Caco-2 (cell line): ENCODE measurements at regions of chr2 and their contacts with region 1.

Region 1: DNA sequence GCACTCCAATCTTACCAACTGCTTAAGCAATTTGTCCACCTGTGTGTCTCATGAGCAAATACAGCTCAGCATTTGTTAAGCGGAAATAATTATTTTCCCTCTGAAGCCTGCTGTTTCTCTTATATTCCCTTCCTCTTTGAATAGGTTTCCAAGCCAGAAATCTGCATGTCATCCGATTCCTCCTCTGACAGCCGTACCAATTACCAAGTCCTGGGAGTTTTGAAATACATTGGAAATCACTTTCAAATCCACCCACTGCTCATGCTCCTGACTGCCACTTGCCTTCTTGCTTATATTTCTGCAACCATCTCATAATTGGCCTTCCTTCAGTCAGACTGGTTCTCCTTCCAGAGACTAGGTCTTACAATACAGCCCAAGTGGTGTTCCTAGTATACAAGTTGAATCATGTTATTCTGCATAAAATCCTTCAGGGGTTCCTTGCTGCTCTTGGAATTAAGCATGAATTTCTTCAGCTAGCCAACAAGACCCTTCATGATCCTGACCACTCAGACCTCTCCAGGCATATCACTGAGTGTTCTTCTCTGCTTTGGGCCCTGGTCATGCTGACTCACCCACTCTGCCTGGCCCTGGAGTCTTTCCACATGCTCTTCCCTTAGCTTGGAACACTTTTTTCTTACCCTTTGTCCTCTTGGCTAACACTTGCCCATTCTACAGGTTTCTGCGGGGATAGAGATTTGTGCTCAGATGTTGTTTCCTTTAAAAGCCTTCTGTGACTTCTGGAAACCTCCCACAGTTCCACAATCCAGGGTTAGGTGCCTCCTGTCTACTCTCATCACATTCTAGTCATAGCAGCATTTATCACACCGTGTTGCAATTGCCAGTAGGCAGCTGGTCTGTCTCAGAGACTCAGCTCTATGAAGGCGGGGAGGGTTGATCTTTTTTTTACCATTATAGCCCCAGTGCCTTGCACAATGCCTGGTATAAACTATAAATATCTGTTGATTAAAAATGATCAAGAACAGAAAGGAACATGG is 157.6 kb downstream of the ARL6IP6 start:
- DNase-seq: no peak
- H3K4me3 ChIP-seq: no peak overlapping the region
- H3K4me3 Mint-ChIP-seq: no peak overlapping the region
- H3K27ac Mint-ChIP-seq: no peak overlapping the region
- H3K4me1 ChIP-seq: no peaks in the 10 kb centered on the region
- H3K4me1 Mint-ChIP-seq: no peaks in the 10 kb centered on the region
- H3K27me3 ChIP-seq: no peaks in the 10 kb centered on the region
- H3K27me3 Mint-ChIP-seq: peaks cover 11% of the 10 kb centered on the region
- CTCF ChIP-seq: no peak

Region 2: GRCh38 chr2:152861349-152861942 is 14.6 kb before region 1 on chr2:
- CTCF ChIA-PET with region 1: no interaction called
- POLR2A ChIA-PET with region 1: no interaction called
- intact Hi-C with region 1: loop called (anchors 1 kb)
- DNase-seq: peak in 1 of 2 experiments; percentile 44
- H3K4me3 ChIP-seq: no peak overlapping the region
- H3K4me3 Mint-ChIP-seq: no peak overlapping the region
- H3K27ac Mint-ChIP-seq: no peak overlapping the region
- H3K4me1 ChIP-seq: no peaks in the 10 kb centered on the region
- H3K4me1 Mint-ChIP-seq: no peaks in the 10 kb centered on the region
- H3K27me3 ChIP-seq: no peaks in the 10 kb centered on the region
- H3K27me3 Mint-ChIP-seq: no peaks in the 10 kb centered on the region
- CTCF ChIP-seq: peak; percentile 38 to 56

Region 3: GRCh38 chr2:152930501-152930900 is 54.5 kb after region 1 on chr2:
- CTCF ChIA-PET with region 1: no interaction called
- POLR2A ChIA-PET with region 1: no interaction called
- intact Hi-C with region 1: no loop called
- DNase-seq: no peak
- H3K4me3 ChIP-seq: no peak overlapping the region
- H3K4me3 Mint-ChIP-seq: no peak overlapping the region
- H3K27ac Mint-ChIP-seq: no peak overlapping the region
- H3K4me1 ChIP-seq: no peaks in the 10 kb centered on the region
- H3K4me1 Mint-ChIP-seq: no peaks in the 10 kb centered on the region
- H3K27me3 ChIP-seq: no peaks in the 10 kb centered on the region
- H3K27me3 Mint-ChIP-seq: no peaks in the 10 kb centered on the region
- CTCF ChIP-seq: no peak